Posterior vena cava (tissue), 2 donors: ENCODE measurements at regions of chr17 and their contacts with region 1.

Region 1: DNA sequence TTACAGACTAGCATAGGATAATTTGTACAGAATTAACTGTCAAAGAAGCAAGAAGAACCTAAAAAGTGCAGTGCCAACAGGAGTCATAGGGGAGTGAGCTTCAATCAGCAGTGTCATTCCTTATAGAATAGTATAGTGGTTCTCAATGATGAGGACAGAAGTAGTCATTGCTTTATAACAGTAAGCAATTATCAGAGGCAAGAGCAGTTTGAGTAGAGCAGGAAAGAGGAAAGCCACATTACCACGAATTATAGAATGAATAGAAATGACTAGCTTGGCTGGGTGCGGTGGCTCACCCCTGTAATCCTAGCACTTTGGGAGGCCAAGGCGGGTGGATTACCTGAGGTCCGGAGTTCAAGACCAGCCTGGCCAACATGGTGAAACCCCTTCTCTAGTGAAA is 209.7 kb upstream of the TBX2 start:
- DNase-seq: no peak

Region 2: GRCh38 chr17:61729689-61730268 is 539.8 kb after region 1 on chr17:
- intact Hi-C with region 1: loop called in 1 of 2 experiments (anchors 5 kb)
- DNase-seq: no peak